ENCODE measurements at regions of chr12 and their contacts with region 1.

Region 1: GRCh38 chr12:59087077-59087673 is 166.9 kb upstream of the LRIG3 start:
- DNase-seq: no peak
- ATAC-seq: no peak
- H3K4me3 ChIP-seq: no peak overlapping the region
- H3K27ac ChIP-seq: no peak overlapping the region
- H3K4me1 ChIP-seq: no peaks in the 10 kb centered on the region
- H3K27me3 ChIP-seq: no peaks in the 10 kb centered on the region
- CTCF ChIP-seq: peak; percentile 50; the same call in 1 of the 2 replicates

Region 2: GRCh38 chr12:57983146-57983857 is 1103.9 kb before region 1 on chr12:
- CTCF ChIA-PET with region 1: no interaction called
- POLR2A ChIA-PET with region 1: no interaction called
- in situ Hi-C with region 1: no loop called
- intact Hi-C with region 1: loop called (anchors 10 kb)
- DNase-seq: peak; percentile 17
- ATAC-seq: no peak
- H3K4me3 ChIP-seq: no peak overlapping the region
- H3K27ac ChIP-seq: no peak overlapping the region
- H3K4me1 ChIP-seq: no peaks in the 10 kb centered on the region
- H3K27me3 ChIP-seq: peaks cover 3% of the 10 kb centered on the region; the same call in 1 of the 2 replicates
- CTCF ChIP-seq: peak; percentile 76; the same call in 1 of the 2 replicates

Region 3: DNA sequence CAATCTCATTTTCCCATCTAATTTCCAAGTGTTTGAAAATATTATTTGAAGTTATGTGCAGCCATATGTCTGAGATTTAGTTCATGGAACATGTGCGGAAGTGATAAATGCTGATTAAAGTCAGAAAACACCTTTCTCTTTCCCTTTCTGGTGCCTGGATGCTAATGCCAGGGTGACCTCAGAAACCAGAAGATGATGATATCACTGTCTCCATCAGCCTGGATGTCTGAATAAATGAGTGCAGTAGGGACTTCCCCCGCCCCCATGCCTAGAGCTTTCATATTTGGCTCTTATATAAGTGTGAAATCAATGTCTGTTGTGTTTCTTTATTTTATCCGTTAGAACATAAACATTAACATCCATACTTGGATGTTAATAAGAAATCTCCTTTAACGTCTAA is 95.0 kb after region 1 on chr12:
- CTCF ChIA-PET with region 1: no interaction called
- POLR2A ChIA-PET with region 1: no interaction called
- in situ Hi-C with region 1: no loop called
- intact Hi-C with region 1: no loop called
- DNase-seq: no peak
- ATAC-seq: no peak
- H3K4me3 ChIP-seq: no peak overlapping the region
- H3K27ac ChIP-seq: no peak overlapping the region
- H3K4me1 ChIP-seq: no peaks in the 10 kb centered on the region
- H3K27me3 ChIP-seq: no peaks in the 10 kb centered on the region; the same call in 1 of the 2 replicates
- CTCF ChIP-seq: no peak

Measured in Panc1 (cell line).